ENCODE measurements at regions of chr7 and their contacts with region 1.

Region 1: GRCh38 chr7:137898839-137899721 is 52.3 kb upstream of the DGKI start:
- DNase-seq: peak; percentile 66 to 71
- ATAC-seq: peak; percentile 95 to 98
- H3K4me3 ChIP-seq: no peak overlapping the region
- H3K27ac ChIP-seq: peak overlapping the region; percentile 34 to 52; a peak in 2 of 6 replicates
- H3K4me1 ChIP-seq: peaks cover 12% of the 10 kb centered on the region; the same call in 1 of the 3 replicates
- CTCF ChIP-seq: peak; percentile 88
- EP300 ChIP-seq: no peak
- POLR2A ChIP-seq: no peak
- RAD21 ChIP-seq: peak; percentile 91 to 93

Region 2: DNA sequence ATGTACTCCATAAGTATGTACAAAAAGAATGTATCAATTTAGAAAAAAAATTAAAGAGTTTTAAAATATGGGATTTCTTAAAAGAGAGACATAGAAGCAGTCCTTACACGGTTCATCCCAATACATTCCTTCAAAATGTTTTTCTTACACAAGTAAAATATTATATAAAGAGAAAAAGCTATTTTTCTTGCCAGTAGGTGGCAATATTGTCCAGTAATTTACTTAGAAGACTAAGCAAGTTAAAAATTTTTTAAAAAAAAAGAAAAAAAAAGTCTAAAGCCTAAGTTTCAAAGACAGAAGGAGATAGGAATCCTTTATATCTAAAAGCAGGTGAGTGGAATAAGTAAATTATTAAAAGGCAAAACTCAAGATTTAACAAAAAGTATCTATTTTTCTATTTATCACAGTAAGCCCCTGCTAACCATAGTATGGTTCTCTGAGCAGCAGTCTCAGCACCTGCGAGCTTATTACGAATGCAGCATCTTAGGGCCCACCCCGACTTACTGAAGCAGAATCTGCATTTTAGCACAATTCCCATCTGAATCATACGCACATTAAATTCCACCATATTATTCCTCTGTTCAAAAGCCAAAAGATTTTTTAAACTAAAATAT is 292.9 kb before region 1 on chr7:
- CTCF ChIA-PET with region 1: interaction called, 24 read pairs
- POLR2A ChIA-PET with region 1: no interaction called
- DNase-seq: peak; percentile 14 to 52
- ATAC-seq: peak in 1 of 2 experiments; percentile 54; a peak in 2 of 6 replicates
- H3K4me3 ChIP-seq: no peak overlapping the region
- H3K27ac ChIP-seq: no peak overlapping the region
- H3K4me1 ChIP-seq: no peaks in the 10 kb centered on the region
- CTCF ChIP-seq: peak; percentile 53
- EP300 ChIP-seq: no peak
- POLR2A ChIP-seq: no peak
- RAD21 ChIP-seq: peak; percentile 45 to 70

Region 3: DNA sequence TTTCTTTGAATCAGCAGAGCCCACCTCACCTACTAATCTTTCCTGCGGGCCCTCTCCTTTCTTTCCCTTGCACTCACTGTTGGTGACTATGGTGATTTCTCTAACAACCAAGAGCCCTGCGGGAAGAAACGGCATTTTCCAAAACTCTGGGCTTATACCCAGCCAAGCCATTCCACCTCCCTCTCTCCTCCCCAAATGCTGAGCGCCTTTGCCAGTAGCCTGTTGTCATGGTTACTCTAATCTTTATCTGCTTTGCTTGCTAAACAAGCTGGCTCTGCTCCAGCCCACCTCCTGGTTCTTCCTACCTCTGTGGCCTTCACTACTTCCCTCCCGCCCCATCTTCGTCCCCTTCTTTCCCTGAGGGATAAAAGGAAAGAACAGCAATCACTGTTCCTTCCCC is 139.0 kb before region 1 on chr7:
- CTCF ChIA-PET with region 1: no interaction called
- POLR2A ChIA-PET with region 1: no interaction called
- DNase-seq: no peak
- ATAC-seq: no peak
- H3K4me3 ChIP-seq: no peak overlapping the region
- H3K27ac ChIP-seq: no peak overlapping the region
- H3K4me1 ChIP-seq: no peaks in the 10 kb centered on the region
- CTCF ChIP-seq: no peak
- EP300 ChIP-seq: no peak
- POLR2A ChIP-seq: no peak
- RAD21 ChIP-seq: no peak

Region 4: DNA sequence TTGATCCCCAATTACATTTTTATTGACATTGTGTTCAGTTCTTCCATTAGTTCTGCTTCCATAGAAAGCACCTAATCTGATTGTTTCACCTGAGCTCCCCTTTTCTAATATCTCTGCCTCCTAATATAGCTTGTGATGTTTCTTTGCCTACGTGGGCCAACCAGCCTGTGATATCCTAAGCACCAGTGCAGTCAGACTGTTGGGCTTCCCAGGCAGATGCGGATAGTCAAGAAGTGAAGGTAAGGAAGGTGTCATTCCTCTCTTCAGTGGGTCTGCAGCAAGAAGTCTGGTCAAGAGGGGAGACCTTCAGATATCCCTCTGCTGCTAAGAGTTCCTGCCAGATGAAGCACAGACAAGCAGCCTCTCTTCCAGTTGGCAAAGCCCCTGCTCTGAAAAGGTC is 36.1 kb before region 1 on chr7:
- CTCF ChIA-PET with region 1: no interaction called
- POLR2A ChIA-PET with region 1: no interaction called
- DNase-seq: no peak
- ATAC-seq: no peak
- H3K4me3 ChIP-seq: no peak overlapping the region
- H3K27ac ChIP-seq: no peak overlapping the region
- H3K4me1 ChIP-seq: no peaks in the 10 kb centered on the region
- CTCF ChIP-seq: no peak
- EP300 ChIP-seq: no peak
- POLR2A ChIP-seq: no peak
- RAD21 ChIP-seq: no peak

Region 5: GRCh38 chr7:137916980-137917645 is 18.0 kb after region 1 on chr7:
- CTCF ChIA-PET with region 1: interaction called, 40 read pairs
- POLR2A ChIA-PET with region 1: no interaction called
- DNase-seq: no peak
- ATAC-seq: no peak
- H3K4me3 ChIP-seq: no peak overlapping the region
- H3K27ac ChIP-seq: no peak overlapping the region
- H3K4me1 ChIP-seq: peaks cover 6% of the 10 kb centered on the region; the same call in 1 of the 3 replicates
- CTCF ChIP-seq: no peak
- EP300 ChIP-seq: no peak
- POLR2A ChIP-seq: no peak
- RAD21 ChIP-seq: no peak

Region 6: GRCh38 chr7:137934941-137935883 is 36.1 kb after region 1 on chr7:
- CTCF ChIA-PET with region 1: interaction called, 16 read pairs
- POLR2A ChIA-PET with region 1: no interaction called
- DNase-seq: no peak
- ATAC-seq: no peak
- H3K4me3 ChIP-seq: no peak overlapping the region
- H3K27ac ChIP-seq: no peak overlapping the region
- H3K4me1 ChIP-seq: peaks cover 42% of the 10 kb centered on the region
- CTCF ChIP-seq: no peak
- EP300 ChIP-seq: no peak
- POLR2A ChIP-seq: no peak
- RAD21 ChIP-seq: no peak

Region 7: GRCh38 chr7:138002096-138002827 is 103.2 kb after region 1 on chr7:
- CTCF ChIA-PET with region 1: interaction called, 461 read pairs
- POLR2A ChIA-PET with region 1: no interaction called
- DNase-seq: peak; percentile 92 to 100
- ATAC-seq: peak; percentile 95 to 97
- H3K4me3 ChIP-seq: peak overlapping the region; percentile 73
- H3K27ac ChIP-seq: peak overlapping the region; percentile 74 to 86
- H3K4me1 ChIP-seq: peaks cover 30% of the 10 kb centered on the region
- CTCF ChIP-seq: peak; percentile 94
- EP300 ChIP-seq: no peak
- POLR2A ChIP-seq: no peak
- RAD21 ChIP-seq: peak; percentile 50 to 52; a peak in 4 of 5 replicates

Region 8: GRCh38 chr7:138015096-138015495 is 116.0 kb after region 1 on chr7:
- CTCF ChIA-PET with region 1: interaction called, 461 read pairs
- POLR2A ChIA-PET with region 1: no interaction called
- DNase-seq: no peak
- ATAC-seq: no peak
- H3K4me3 ChIP-seq: no peak overlapping the region
- H3K27ac ChIP-seq: no peak overlapping the region
- H3K4me1 ChIP-seq: no peaks in the 10 kb centered on the region
- CTCF ChIP-seq: no peak
- EP300 ChIP-seq: no peak
- POLR2A ChIP-seq: no peak
- RAD21 ChIP-seq: no peak

Region 9: GRCh38 chr7:138316421-138317043 is 417.5 kb after region 1 on chr7:
- CTCF ChIA-PET with region 1: no interaction called
- POLR2A ChIA-PET with region 1: no interaction called
- DNase-seq: peak; percentile 13 to 63
- ATAC-seq: peak; percentile 73 to 86; a peak in 5 of 6 replicates
- H3K4me3 ChIP-seq: no peak overlapping the region
- H3K27ac ChIP-seq: peak overlapping the region; percentile 68 to 82
- H3K4me1 ChIP-seq: peaks cover 11% of the 10 kb centered on the region
- CTCF ChIP-seq: no peak
- EP300 ChIP-seq: peak in 1 of 2 experiments; percentile 41; a peak in 1 of 5 replicates
- POLR2A ChIP-seq: no peak
- RAD21 ChIP-seq: peak in 1 of 2 experiments; percentile 19; a peak in 1 of 5 replicates